ENCODE measurements at regions of chr12 and their contacts with region 1.

Region 1: GRCh38 chr12:6662906-6663742 is at the start of gene ING4:
- H3K4me3 Mint-ChIP-seq: peak within 1 kb of the TSS; percentile 90
- H3K27ac Mint-ChIP-seq: peak within 1 kb of the TSS; percentile 88
- H3K4me1 Mint-ChIP-seq: peaks cover 25% of the 10 kb centered on the region
- H3K27me3 Mint-ChIP-seq: no peaks in the 10 kb centered on the region

Region 2: GRCh38 chr12:6135071-6135470 is 528.1 kb before region 1 on chr12:
- intact Hi-C with region 1: no loop called
- H3K4me3 Mint-ChIP-seq: no peak overlapping the region
- H3K27ac Mint-ChIP-seq: no peak overlapping the region
- H3K4me1 Mint-ChIP-seq: peaks cover 31% of the 10 kb centered on the region
- H3K27me3 Mint-ChIP-seq: peaks cover 3% of the 10 kb centered on the region

Region 3: GRCh38 chr12:6493497-6494257 is 169.4 kb before region 1 on chr12 and contains the start of gene NCAPD2:
- intact Hi-C with region 1: loop called (anchors 5 kb)
- H3K4me3 Mint-ChIP-seq: peak within 1 kb of the TSS; percentile 95
- H3K27ac Mint-ChIP-seq: peak within 1 kb of the TSS; percentile 99
- H3K4me1 Mint-ChIP-seq: peaks cover 15% of the 10 kb centered on the region
- H3K27me3 Mint-ChIP-seq: no peaks in the 10 kb centered on the region

Region 4: DNA sequence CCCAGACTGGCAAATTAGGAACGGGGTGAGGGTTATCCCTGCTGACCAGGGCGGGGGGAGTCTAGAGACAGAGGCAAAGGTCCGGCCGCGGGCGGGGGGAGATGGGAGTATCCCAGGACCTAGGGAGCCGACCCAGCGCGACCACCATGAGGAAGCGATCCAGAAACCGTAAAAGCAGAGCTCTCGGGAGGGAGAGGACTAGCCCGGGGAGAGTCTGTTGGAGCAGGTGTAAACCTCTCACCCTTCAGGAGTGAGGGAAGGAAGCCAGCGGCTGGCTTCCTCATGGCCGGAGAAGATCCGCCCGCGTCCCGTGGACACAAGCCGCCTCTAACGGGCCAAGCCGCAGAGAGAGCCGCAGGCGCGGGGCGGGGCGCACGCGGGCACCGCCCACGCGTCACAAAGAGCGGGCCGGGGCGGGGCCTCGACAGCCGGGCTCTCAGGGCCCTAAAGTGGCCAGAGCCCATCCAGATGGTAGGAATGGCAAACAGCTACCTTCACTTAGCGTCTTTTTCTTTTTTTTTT is 16.0 kb before region 1 on chr12 and contains the start of gene ACRBP:
- intact Hi-C with region 1: loop called (anchors 2 kb)
- H3K4me3 Mint-ChIP-seq: peak within 1 kb of the TSS; percentile 93
- H3K27ac Mint-ChIP-seq: peak within 1 kb of the TSS; percentile 98
- H3K4me1 Mint-ChIP-seq: peaks cover 52% of the 10 kb centered on the region
- H3K27me3 Mint-ChIP-seq: no peaks in the 10 kb centered on the region

Region 5: DNA sequence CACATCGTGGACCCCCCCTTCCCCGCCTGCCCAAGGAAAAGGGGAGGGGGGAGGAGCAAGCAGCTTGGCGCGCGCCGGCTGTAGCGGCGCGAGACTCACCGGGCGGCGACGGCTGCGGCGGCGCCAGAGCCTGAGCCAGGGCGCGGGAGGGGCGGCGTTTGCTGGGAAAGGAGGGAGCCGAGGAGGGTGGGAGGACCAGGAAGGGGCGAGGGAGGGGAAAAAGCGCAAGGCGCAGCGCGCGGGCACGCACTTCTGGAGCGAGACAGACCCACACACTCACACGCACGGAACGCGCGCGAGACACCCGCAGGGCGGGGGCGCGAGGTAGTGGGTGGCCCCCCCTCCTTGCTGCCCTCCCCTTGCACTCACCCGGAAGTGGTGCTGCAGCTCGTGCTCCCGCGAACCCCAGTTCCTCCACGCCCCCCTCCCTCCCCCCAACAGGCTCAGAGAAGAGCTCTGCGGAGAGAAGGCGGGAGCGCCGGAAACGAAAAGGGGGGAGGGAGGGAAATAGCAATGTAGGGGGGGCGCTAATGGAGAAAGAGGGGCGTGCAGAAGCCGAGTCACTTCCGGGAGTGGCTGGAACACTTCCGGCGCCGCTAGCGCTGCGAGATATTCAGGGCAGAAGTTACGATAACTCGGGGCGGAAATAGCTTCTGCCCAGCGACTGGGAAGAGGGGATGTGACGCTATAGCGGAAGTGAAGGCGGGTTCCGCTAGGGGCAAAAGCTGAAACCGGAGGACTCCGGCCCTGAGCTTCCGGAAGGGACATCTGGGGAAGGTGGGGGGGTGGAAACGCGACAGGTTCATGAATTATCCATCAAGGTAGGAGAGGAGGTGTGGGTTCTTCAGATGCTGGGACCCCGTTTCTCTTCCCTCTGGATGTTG is 26.1 kb after region 1 on chr12 and contains the start of gene ZNF384:
- intact Hi-C with region 1: loop called (anchors 1 kb)
- H3K4me3 Mint-ChIP-seq: peak within 1 kb of the TSS; percentile 97
- H3K27ac Mint-ChIP-seq: peak within 1 kb of the TSS; percentile 97
- H3K4me1 Mint-ChIP-seq: peaks cover 50% of the 10 kb centered on the region
- H3K27me3 Mint-ChIP-seq: peaks cover 10% of the 10 kb centered on the region

Region 6: DNA sequence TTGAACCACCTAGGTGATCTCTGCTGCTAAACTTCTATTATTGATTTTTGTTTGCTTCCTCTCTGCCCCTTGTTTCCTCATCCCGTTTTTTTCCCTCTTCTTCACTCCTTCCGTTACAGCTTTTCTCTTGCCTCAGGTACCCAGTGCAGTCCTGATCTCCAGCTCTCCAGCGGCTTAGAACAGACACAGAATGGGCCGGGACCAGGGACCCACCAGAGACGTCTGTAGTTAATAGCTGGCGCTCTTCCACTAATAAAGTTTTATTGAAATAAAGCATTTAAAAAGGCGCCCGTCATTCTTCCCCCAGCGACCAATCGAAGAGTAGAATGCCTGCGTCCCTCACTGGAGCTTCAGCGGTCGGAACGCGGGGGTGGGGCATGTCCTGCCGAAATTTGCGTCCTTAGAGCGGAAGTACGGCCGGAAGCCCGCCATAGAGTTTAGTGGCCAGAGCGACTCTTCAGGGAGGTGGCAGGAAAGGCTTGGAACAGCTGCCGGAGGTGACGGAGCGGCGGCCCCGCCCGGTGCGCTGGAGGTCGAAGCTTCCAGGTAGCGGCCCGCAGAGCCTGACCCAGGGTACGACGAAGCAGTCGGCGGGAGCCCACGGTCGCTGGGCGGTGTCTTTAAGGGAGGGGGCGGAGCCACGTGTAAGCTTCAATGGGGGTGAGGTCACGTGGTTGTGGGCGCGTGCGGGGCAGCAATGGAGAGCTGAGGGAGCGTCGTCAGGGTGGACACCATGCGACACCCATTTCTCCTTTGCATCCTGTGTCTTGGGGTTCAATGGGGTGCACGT is 60.7 kb after region 1 on chr12 and contains the start of gene COPS7A:
- intact Hi-C with region 1: no loop called
- H3K4me3 Mint-ChIP-seq: peak within 1 kb of the TSS; percentile 93
- H3K27ac Mint-ChIP-seq: peak within 1 kb of the TSS; percentile 88
- H3K4me1 Mint-ChIP-seq: peaks cover 26% of the 10 kb centered on the region
- H3K27me3 Mint-ChIP-seq: peaks cover 2% of the 10 kb centered on the region

Region 7: GRCh38 chr12:6851921-6852650 is 189.0 kb after region 1 on chr12 and contains the start of gene USP5:
- intact Hi-C with region 1: loop called (anchors 1 kb)
- H3K4me3 Mint-ChIP-seq: peak within 1 kb of the TSS; percentile 87
- H3K27ac Mint-ChIP-seq: peak within 1 kb of the TSS; percentile 91
- H3K4me1 Mint-ChIP-seq: peaks cover 35% of the 10 kb centered on the region
- H3K27me3 Mint-ChIP-seq: no peaks in the 10 kb centered on the region